B cell (primary cell): ENCODE measurements at regions of chr11 and their contacts with region 1.

Region 1: GRCh38 chr11:33362051-33362910 is 105.1 kb downstream of the HIPK3 start:
- DNase-seq: peak; percentile 66
- ATAC-seq: peak; percentile 66
- H3K4me3 ChIP-seq: no peak overlapping the region
- H3K4me3 Mint-ChIP-seq: no peak overlapping the region
- H3K27ac ChIP-seq: no peak overlapping the region
- H3K27ac Mint-ChIP-seq: no peak overlapping the region
- H3K4me1 ChIP-seq: no peaks in the 10 kb centered on the region
- H3K4me1 Mint-ChIP-seq: no peaks in the 10 kb centered on the region
- H3K27me3 ChIP-seq: peaks cover 0 to 4% (median 0%) of the 10 kb centered on the region in 4 experiments
- H3K27me3 Mint-ChIP-seq: no peaks in the 10 kb centered on the region
- CTCF ChIP-seq: peak; percentile 83

Region 2: GRCh38 chr11:33344611-33345010 is 17.7 kb before region 1 on chr11:
- CTCF ChIA-PET with region 1: interaction called, 10 read pairs
- POLR2A ChIA-PET with region 1: no interaction called
- intact Hi-C with region 1: no loop called
- DNase-seq: no peak
- ATAC-seq: no peak
- H3K4me3 ChIP-seq: no peak overlapping the region
- H3K4me3 Mint-ChIP-seq: no peak overlapping the region
- H3K27ac ChIP-seq: peak overlapping the region in 1 of 2 donors; percentile 21
- H3K27ac Mint-ChIP-seq: no peak overlapping the region
- H3K4me1 ChIP-seq: peaks cover 14 to 17% of the 10 kb centered on the region in 2 donors
- H3K4me1 Mint-ChIP-seq: peaks cover 23% of the 10 kb centered on the region
- H3K27me3 ChIP-seq: no peaks in the 10 kb centered on the region
- H3K27me3 Mint-ChIP-seq: no peaks in the 10 kb centered on the region
- CTCF ChIP-seq: no peak

Region 3: DNA sequence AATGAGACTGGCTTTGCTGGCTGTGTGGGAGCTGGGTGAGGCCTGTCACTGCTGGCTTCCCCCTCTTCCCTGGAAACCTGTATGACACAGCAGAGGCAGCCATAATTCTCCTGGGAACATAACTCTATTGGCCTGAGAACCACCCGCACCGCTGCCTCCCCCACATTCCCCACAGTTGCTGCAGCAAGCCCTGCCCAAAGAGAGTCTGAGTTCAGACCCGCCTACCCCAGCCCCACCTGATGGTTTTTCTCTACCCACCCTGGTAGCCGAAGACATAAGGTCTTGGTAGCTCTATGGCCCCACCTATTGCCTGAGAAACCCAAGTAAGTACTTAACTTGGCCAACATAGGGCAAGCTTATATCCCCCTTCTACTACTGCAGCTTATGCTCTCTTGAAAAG is 163.5 kb after region 1 on chr11:
- CTCF ChIA-PET with region 1: no interaction called
- POLR2A ChIA-PET with region 1: no interaction called
- intact Hi-C with region 1: loop called (anchors 5 kb)
- DNase-seq: no peak
- ATAC-seq: no peak
- H3K4me3 ChIP-seq: no peak overlapping the region
- H3K4me3 Mint-ChIP-seq: no peak overlapping the region
- H3K27ac ChIP-seq: no peak overlapping the region
- H3K27ac Mint-ChIP-seq: no peak overlapping the region
- H3K4me1 ChIP-seq: no peaks in the 10 kb centered on the region
- H3K4me1 Mint-ChIP-seq: no peaks in the 10 kb centered on the region
- H3K27me3 ChIP-seq: peaks cover 0 to 5% (median 0%) of the 10 kb centered on the region in 4 experiments
- H3K27me3 Mint-ChIP-seq: peaks cover 30% of the 10 kb centered on the region
- CTCF ChIP-seq: no peak

Region 4: DNA sequence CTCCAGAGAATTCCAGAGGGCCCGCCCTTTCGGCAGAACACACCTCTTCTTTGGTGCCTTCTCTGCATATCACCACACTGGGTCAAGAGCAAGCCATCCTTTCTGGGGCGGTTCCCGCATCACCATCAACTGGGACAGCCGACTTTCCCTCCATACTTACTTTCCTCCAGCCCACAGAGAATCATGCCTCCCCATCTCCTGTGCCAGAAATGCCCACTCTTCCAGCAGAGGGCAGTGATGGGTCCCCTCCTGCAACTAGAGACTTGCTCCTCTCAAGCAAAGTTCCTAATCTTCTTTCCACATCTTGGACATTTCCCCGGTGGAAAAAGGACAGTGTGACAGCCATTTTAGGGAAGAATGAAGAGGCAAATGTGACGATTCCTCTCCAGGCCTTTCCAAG is 180.6 kb after region 1 on chr11:
- CTCF ChIA-PET with region 1: no interaction called
- POLR2A ChIA-PET with region 1: no interaction called
- intact Hi-C with region 1: loop called (anchors 2 kb)
- DNase-seq: peak; percentile 47
- ATAC-seq: no peak
- H3K4me3 ChIP-seq: no peak overlapping the region
- H3K4me3 Mint-ChIP-seq: no peak overlapping the region
- H3K27ac ChIP-seq: no peak overlapping the region
- H3K27ac Mint-ChIP-seq: no peak overlapping the region
- H3K4me1 ChIP-seq: no peaks in the 10 kb centered on the region
- H3K4me1 Mint-ChIP-seq: no peaks in the 10 kb centered on the region
- H3K27me3 ChIP-seq: peaks cover 0 to 8% (median 3%) of the 10 kb centered on the region in 4 experiments
- H3K27me3 Mint-ChIP-seq: peaks cover 36% of the 10 kb centered on the region
- CTCF ChIP-seq: peak; percentile 64

Region 5: GRCh38 chr11:33687733-33688479 is 325.6 kb after region 1 on chr11:
- CTCF ChIA-PET with region 1: no interaction called
- POLR2A ChIA-PET with region 1: no interaction called
- intact Hi-C with region 1: loop called (anchors 5 kb)
- DNase-seq: no peak
- ATAC-seq: no peak
- H3K4me3 ChIP-seq: no peak overlapping the region
- H3K4me3 Mint-ChIP-seq: no peak overlapping the region
- H3K27ac ChIP-seq: no peak overlapping the region
- H3K27ac Mint-ChIP-seq: no peak overlapping the region
- H3K4me1 ChIP-seq: no peaks in the 10 kb centered on the region
- H3K4me1 Mint-ChIP-seq: no peaks in the 10 kb centered on the region
- H3K27me3 ChIP-seq: peaks cover 0 to 11% (median 0%) of the 10 kb centered on the region in 4 experiments
- H3K27me3 Mint-ChIP-seq: peaks cover 32% of the 10 kb centered on the region
- CTCF ChIP-seq: peak; percentile 15